Activated CD4-positive, alpha-beta T cell treated with anti-CD3 and anti-CD28 coated beads, Interleukin-2, amount 10 ng/mL, durations not matched to agents 7 days and 5 days (primary cell): ENCODE measurements at regions of chr16 and their contacts with region 1.

Region 1: DNA sequence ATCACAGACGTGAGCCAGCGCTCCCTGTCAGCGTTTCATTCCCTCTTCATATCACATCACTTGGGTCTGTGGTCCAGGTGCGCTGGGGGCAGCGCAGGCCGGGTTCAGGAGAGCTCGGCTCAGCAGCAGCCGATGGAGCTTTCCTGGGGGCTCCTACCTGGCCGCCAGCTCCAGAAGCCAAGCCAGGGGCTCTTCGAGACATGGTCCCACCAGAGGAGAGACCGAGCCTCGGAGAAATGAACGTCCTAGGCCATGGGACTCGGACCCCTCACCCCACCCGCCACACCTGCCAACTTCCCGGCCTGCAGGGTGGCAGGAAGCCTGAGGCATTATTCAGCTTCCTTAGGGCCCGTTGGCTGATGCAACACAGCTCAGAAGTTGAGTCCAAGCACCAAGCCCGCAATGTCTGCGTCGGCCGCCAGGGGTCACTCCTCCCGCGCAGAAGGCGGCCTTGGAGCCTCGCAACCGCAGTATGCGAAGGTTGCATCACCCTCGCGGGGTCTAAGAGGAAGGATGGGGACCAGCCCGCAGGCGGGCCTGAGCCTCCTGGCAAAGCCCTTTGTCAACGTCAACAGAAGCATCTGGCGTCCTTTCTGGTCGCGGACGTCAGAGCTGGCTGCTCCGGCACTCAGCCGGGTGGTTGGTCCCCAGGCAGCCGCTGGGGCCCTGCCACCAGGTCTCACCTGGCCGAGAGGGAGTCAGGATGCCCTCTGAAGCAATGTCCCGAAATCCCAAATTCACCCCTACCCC is 13.2 kb upstream of the KLHDC4 start:
- DNase-seq: peak; percentile 94
- H3K4me3 Mint-ChIP-seq: peak overlapping the region; percentile 12
- H3K27ac Mint-ChIP-seq: peak overlapping the region; percentile 95
- H3K4me1 Mint-ChIP-seq: peaks cover 55% of the 10 kb centered on the region
- H3K27me3 Mint-ChIP-seq: no peaks in the 10 kb centered on the region

Region 2: DNA sequence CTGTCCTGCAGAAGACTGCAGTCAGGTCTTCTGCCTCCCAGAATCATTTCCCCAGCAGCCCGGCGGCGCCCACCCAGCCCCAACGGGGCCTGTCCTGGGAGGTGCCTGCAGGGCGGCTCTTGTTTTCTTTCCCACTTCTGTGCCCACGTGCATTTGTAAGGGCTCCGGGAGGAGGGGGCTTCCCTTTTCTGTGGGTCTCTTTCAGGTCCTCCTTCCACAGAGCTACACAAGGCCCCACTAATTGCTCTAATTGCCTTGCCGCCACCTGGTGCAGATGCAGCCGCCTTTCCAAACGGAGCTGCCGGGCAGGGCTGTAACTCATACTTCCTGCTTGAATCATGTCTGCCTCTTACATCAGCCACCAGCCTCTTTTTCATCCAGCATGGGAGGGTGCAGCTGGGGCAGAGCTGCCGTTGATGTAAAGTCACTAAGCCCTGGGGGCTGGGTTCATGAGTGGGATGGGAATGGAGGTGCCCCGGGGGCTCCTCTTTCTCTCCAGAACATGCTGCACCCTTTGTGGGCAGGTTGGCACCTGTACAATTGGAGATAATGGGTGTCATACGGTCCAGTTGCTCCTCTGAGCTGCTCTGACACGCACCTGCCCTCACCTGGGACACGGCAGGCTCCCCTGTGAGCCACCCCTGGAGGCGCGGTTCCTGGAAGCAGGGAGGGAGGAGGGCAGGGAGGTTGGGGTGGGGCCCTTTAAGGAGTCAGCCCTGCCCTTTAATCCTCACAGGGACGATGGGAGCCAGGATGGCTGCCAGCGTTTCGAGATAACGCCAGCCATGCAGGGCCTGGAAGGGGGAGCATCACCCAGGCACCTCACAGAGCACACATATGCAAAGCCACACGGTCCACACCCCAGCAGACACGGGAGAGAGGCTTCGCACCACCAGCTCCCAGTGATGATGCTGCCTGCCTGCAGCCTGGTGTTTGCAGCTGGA is 27.9 kb after region 1 on chr16:
- CTCF ChIA-PET with region 1: interaction called, 18 read pairs
- POLR2A ChIA-PET with region 1: interaction called, 9 read pairs
- DNase-seq: peak; percentile 60
- H3K4me3 Mint-ChIP-seq: peak overlapping the region; percentile 86
- H3K27ac Mint-ChIP-seq: peak overlapping the region; percentile 98
- H3K4me1 Mint-ChIP-seq: peaks cover 35% of the 10 kb centered on the region
- H3K27me3 Mint-ChIP-seq: no peaks in the 10 kb centered on the region

Region 3: GRCh38 chr16:87834623-87835407 is 55.8 kb after region 1 on chr16:
- CTCF ChIA-PET with region 1: interaction called, 13 read pairs
- POLR2A ChIA-PET with region 1: no interaction called
- DNase-seq: no peak
- H3K4me3 Mint-ChIP-seq: no peak overlapping the region
- H3K27ac Mint-ChIP-seq: no peak overlapping the region
- H3K4me1 Mint-ChIP-seq: peaks cover 3% of the 10 kb centered on the region
- H3K27me3 Mint-ChIP-seq: no peaks in the 10 kb centered on the region

Region 4: DNA sequence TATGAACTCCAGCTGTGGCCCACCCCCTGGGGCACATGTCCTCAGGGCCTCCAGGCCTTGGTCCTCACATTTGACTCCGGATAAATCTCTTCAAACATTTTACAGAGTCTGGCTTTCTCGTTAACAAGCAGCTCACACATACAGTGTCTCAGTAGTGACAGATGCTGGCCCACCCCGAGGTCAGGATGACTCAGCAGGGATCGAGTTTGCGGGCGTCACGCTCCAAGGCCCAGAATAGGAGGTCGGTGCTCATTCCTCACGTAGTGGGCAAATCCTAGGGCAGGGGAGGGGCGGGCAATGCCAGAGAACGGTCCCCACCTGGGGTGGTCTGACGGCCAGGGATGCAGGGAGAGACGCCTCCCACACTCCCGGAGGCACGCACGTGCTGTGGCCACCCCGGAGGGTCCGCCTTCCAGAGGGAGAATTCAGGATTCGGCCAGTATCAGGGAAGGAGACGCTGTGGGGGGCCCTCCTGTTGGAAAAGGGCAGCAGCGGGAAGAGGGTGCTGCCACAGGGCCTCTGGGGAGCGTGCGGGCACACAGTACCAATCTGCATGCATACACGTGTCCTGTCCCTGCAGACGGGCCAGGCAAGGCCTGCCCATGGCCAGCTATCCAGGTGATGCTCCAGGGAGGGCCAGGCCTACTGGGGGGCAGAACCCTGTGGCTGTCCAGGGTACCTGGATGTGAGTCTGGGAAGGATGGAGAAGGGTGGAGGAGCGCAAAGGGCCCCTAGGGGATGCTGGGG is 81.7 kb after region 1 on chr16:
- CTCF ChIA-PET with region 1: interaction called, 249 read pairs
- POLR2A ChIA-PET with region 1: no interaction called
- DNase-seq: no peak
- H3K4me3 Mint-ChIP-seq: peak overlapping the region; percentile 16
- H3K27ac Mint-ChIP-seq: peak overlapping the region; percentile 83
- H3K4me1 Mint-ChIP-seq: peaks cover 78% of the 10 kb centered on the region
- H3K27me3 Mint-ChIP-seq: no peaks in the 10 kb centered on the region

Region 5: GRCh38 chr16:87914812-87915211 is 135.8 kb after region 1 on chr16:
- CTCF ChIA-PET with region 1: interaction called, 35 read pairs
- POLR2A ChIA-PET with region 1: no interaction called
- DNase-seq: no peak
- H3K4me3 Mint-ChIP-seq: no peak overlapping the region
- H3K27ac Mint-ChIP-seq: no peak overlapping the region
- H3K4me1 Mint-ChIP-seq: peaks cover under 1% of the 10 kb centered on the region
- H3K27me3 Mint-ChIP-seq: no peaks in the 10 kb centered on the region